Mammary epithelial cell (primary cell): ENCODE measurements at regions of chr16 and their contacts with region 1.

Region 1: DNA sequence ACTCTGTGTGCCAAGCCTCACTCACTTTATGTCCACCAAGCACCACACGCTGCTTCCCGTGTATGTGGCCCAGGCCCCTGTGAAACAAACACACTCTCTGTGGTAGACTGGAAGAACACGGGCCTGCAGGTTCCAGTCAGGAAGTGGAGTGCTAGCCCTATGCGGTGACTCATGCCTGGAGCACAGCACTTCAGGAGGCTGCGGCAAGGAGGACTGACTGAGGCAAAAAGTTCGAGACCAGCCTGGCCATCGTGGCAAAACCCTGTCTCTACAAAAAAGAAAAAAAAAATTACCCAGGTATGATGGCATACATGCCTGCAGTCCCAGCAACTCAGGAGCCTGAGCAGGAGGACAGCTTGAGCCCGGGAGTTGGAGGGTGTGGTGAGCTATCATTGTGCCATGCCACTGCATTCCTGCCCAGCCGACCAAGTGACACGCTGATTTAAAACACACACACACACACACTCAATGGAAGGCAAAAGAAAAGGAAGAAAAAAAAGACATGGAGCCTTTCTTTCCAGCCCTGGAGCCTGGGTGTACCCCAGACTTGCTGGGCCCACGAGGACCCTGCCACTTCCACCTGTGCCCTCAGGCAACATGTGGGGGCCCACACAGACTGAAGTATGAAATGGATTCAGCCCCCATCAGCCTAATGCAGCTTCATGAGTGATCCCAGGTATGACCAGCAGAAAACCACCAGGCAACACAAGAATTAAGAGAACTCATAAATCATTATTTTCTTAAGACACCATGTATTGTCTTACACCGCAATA is 126.6 kb downstream of the ANKRD11 start:
- DNase-seq: peak; percentile 73
- H3K4me3 ChIP-seq: no peak overlapping the region
- H3K27ac ChIP-seq: peak overlapping the region; percentile 56
- H3K4me1 ChIP-seq: peaks cover 70% of the 10 kb centered on the region
- H3K27me3 ChIP-seq: no peaks in the 10 kb centered on the region
- CTCF ChIP-seq: no peak

Region 2: DNA sequence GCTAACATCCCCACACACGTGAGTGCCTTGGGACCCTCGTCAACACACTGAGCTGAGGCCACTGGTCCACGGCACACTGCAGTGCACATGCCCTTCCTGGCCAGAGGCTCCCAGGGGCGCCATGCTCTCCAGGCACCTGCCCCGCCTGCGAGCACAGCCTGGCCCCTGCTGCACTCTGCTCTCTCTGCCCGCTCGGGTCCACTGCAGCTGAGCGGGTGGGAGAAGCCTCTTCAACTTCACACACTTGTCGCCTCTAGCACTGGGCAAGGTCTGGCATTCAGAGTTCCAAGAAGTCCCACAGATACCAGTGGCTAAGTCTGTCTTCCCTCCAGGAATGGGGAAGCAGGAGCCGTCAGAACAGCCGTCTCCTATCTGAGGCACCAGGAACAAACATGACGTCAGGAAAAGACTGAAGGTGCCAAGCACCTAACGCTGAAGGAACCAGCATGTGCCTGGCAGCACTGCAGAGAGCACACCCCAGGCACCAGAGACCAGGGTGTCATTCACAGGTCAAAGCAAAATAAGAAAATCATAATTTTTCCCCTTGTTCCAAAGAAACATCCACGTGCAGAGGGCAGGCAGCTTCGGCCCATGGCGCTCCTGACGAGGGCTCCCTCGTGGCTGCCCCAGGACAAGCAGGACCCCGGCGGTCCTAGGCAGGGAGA is 63.4 kb before region 1 on chr16:
- CTCF ChIA-PET with region 1: no interaction called
- dilution Hi-C with region 1: no loop called
- in situ Hi-C with region 1: no loop called
- intact Hi-C with region 1: loop called (anchors 5 kb)
- DNase-seq: no peak
- H3K4me3 ChIP-seq: no peak overlapping the region
- H3K27ac ChIP-seq: no peak overlapping the region
- H3K4me1 ChIP-seq: peaks cover 17% of the 10 kb centered on the region
- H3K27me3 ChIP-seq: no peaks in the 10 kb centered on the region
- CTCF ChIP-seq: no peak

Region 3: DNA sequence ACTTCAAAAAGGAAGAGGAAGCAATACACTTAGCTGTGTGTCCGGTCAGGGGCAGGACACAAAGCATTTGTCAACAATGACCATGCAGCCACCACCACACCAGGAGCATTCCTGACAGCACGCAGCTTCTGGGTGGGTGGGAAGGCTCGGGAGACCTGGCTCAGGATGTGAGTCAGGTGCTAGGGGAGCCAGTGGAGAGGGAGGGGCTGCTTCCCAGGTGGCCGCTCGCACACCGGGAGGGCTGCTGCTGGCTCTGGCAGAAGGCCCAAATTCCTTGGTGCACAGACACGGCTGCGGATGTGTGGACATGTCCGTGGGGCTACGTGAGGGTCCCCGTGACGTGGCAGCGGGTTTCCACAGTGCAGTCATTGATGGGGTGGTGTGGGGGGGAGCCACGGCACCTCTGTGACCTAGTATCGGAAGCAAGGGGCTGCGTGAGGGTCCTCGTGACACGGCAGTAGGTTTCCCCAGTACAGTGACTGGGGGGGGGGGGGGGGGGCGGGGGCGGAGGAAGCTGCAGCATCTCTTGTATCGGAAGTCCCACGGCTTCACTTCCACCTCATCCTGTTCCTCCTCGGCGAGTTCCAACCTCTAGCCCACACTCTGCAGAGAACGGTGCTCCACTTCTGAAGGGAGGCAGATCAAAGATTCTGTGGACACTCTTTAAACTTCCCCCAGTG is 33.5 kb before region 1 on chr16:
- CTCF ChIA-PET with region 1: no interaction called
- dilution Hi-C with region 1: no loop called
- in situ Hi-C with region 1: no loop called
- intact Hi-C with region 1: loop called (anchors 2 kb)
- DNase-seq: peak; percentile 79
- H3K4me3 ChIP-seq: no peak overlapping the region
- H3K27ac ChIP-seq: peak overlapping the region; percentile 25
- H3K4me1 ChIP-seq: peaks cover 67% of the 10 kb centered on the region
- H3K27me3 ChIP-seq: no peaks in the 10 kb centered on the region
- CTCF ChIP-seq: no peak

Region 4: DNA sequence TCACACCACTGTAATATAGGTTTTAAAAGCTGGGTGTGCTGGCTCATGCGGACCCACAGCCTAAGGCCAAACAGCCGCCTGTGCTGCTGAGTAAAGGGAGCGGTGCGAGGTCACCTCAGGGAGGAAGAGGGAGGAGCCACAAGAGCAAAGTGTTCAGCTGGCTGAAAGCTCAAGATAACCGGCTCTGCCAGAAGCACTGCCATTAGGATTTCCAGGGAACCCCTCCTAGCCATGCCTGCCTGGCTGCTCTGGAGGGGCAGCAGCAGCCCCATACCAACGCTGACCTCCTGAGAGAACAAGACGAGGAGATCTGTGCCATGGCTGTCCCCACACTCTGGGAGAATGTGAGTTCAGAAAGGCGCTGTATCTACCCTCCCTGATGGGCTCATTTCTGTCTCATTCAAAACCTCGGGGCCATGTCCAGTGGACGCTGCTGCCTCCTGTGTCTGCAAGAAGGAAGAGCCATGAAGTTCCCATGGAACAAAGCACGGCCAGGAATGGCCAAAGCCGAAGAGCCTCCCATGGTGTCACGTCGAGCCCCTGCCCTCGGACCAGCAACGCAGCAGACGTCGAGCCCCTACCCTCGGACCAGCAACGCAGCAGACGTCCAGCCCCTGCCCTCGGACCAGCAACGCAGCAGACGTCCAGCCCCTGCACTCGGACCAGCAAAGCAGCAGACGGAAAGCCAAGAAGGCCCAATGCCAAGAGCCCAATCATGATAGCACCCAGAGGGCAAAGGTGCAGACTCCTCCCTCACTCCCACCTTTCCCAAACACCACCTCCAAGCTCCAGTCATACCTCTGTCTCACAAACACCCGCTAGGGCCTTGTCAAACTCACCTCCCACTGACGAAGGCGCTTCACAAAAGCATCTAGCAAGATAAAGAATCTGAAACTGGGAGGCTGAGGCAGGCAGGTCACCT is 19.5 kb after region 1 on chr16:
- CTCF ChIA-PET with region 1: interaction called, 14 read pairs
- dilution Hi-C with region 1: no loop called
- in situ Hi-C with region 1: no loop called
- intact Hi-C with region 1: loop called (anchors 2 kb)
- DNase-seq: peak; percentile 74
- H3K4me3 ChIP-seq: no peak overlapping the region
- H3K27ac ChIP-seq: peak overlapping the region; percentile 32
- H3K4me1 ChIP-seq: peaks cover 35% of the 10 kb centered on the region
- H3K27me3 ChIP-seq: no peaks in the 10 kb centered on the region
- CTCF ChIP-seq: no peak

Region 5: GRCh38 chr16:89395141-89395874 is 31.5 kb after region 1 on chr16:
- CTCF ChIA-PET with region 1: no interaction called
- dilution Hi-C with region 1: no loop called
- in situ Hi-C with region 1: no loop called
- intact Hi-C with region 1: loop called (anchors 1 kb)
- DNase-seq: peak; percentile 88
- H3K4me3 ChIP-seq: no peak overlapping the region
- H3K27ac ChIP-seq: peak overlapping the region; percentile 43
- H3K4me1 ChIP-seq: peaks cover 47% of the 10 kb centered on the region
- H3K27me3 ChIP-seq: no peaks in the 10 kb centered on the region
- CTCF ChIP-seq: no peak

Region 6: GRCh38 chr16:89436366-89436765 is 72.6 kb after region 1 on chr16:
- CTCF ChIA-PET with region 1: no interaction called
- dilution Hi-C with region 1: loop called (anchors 5 kb)
- in situ Hi-C with region 1: no loop called
- intact Hi-C with region 1: no loop called
- DNase-seq: no peak
- H3K4me3 ChIP-seq: no peak overlapping the region
- H3K27ac ChIP-seq: no peak overlapping the region
- H3K4me1 ChIP-seq: no peaks in the 10 kb centered on the region
- H3K27me3 ChIP-seq: no peaks in the 10 kb centered on the region
- CTCF ChIP-seq: no peak